Activated CD4-positive, alpha-beta T cell treated with anti-CD3 and anti-CD28 coated beads, Interleukin-2, amount 10 ng/mL, durations not matched to agents 7 days and 5 days (primary cell): ENCODE measurements at regions of chr5 and their contacts with region 1.

Region 1: DNA sequence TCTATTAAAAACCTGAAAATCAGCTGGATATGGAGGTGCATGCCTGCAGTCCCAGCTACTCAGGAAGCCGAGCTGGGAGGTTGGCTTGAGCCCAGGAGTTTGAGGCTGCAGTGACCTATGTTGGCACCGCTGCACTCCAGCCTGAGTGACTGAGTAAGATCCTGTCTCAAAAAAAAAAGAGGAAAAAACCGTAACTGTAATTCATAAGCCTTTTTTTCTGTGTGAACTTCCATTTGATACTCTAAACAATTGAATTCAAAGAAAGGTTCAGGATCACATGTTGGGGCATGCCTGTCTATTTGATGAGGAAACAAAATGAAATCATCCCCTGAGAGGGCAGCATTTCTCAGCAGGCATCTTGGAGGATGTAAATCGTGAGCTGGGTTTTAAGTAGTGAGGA is 38.8 kb downstream of the ITGA2 start:
- DNase-seq: no peak
- H3K4me3 Mint-ChIP-seq: no peak overlapping the region
- H3K27ac Mint-ChIP-seq: no peak overlapping the region
- H3K4me1 Mint-ChIP-seq: peaks cover 30% of the 10 kb centered on the region
- H3K27me3 Mint-ChIP-seq: no peaks in the 10 kb centered on the region

Region 2: GRCh38 chr5:52943285-52943684 is 84.6 kb before region 1 on chr5:
- CTCF ChIA-PET with region 1: no interaction called
- POLR2A ChIA-PET with region 1: no interaction called
- DNase-seq: no peak
- H3K4me3 Mint-ChIP-seq: no peak overlapping the region
- H3K27ac Mint-ChIP-seq: no peak overlapping the region
- H3K4me1 Mint-ChIP-seq: peaks cover 16% of the 10 kb centered on the region
- H3K27me3 Mint-ChIP-seq: peaks cover 8% of the 10 kb centered on the region

Region 3: GRCh38 chr5:52983731-52984636 is 43.9 kb before region 1 on chr5:
- CTCF ChIA-PET with region 1: no interaction called
- POLR2A ChIA-PET with region 1: no interaction called
- DNase-seq: no peak
- H3K4me3 Mint-ChIP-seq: no peak overlapping the region
- H3K27ac Mint-ChIP-seq: no peak overlapping the region
- H3K4me1 Mint-ChIP-seq: peaks cover 16% of the 10 kb centered on the region
- H3K27me3 Mint-ChIP-seq: peaks cover 71% of the 10 kb centered on the region

Region 4: DNA sequence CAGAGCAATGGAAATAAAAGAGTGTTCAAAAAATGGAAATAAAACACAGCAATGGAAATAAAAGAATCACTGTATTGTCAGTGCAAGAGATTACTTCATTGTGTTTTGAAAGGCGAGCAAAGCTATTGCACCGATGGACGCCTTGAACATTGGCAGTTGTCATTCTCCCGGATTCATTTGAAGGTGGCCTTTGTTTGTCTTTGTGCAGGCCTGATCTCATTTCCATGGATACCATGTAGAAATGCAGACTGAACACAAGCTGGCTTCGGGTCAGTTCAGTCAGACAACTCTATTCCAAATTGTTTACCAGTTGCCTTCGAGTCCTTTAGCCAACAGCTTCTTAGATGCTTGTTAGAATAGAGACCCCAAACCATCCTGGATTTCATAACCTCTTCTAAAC is 30.5 kb before region 1 on chr5:
- CTCF ChIA-PET with region 1: no interaction called
- POLR2A ChIA-PET with region 1: no interaction called
- DNase-seq: no peak
- H3K4me3 Mint-ChIP-seq: no peak overlapping the region
- H3K27ac Mint-ChIP-seq: no peak overlapping the region
- H3K4me1 Mint-ChIP-seq: peaks cover 10% of the 10 kb centered on the region
- H3K27me3 Mint-ChIP-seq: peaks cover 3% of the 10 kb centered on the region

Region 5: DNA sequence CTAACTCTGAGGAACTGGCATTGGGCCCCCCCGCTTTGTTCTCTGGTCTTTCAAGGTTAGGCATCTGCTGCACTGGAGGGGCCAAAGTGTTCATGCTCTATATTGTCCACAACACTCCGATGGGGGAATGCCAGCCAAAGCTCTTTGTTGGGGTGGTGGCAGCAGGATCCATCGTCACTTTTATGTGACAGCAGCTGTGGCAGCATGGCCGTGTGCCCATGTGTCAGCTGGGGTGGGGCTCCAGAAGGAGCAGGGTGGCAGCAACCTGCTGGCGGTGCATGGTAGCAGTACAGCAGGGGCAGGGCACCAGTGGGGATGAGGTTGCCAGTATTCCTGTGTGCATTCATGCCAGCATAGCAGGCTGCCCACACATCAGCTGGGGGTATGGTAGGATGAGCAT is 10.5 kb before region 1 on chr5:
- CTCF ChIA-PET with region 1: interaction called, 10 read pairs
- POLR2A ChIA-PET with region 1: no interaction called
- DNase-seq: no peak
- H3K4me3 Mint-ChIP-seq: no peak overlapping the region
- H3K27ac Mint-ChIP-seq: no peak overlapping the region
- H3K4me1 Mint-ChIP-seq: peaks cover 19% of the 10 kb centered on the region
- H3K27me3 Mint-ChIP-seq: peaks cover 39% of the 10 kb centered on the region

Region 6: DNA sequence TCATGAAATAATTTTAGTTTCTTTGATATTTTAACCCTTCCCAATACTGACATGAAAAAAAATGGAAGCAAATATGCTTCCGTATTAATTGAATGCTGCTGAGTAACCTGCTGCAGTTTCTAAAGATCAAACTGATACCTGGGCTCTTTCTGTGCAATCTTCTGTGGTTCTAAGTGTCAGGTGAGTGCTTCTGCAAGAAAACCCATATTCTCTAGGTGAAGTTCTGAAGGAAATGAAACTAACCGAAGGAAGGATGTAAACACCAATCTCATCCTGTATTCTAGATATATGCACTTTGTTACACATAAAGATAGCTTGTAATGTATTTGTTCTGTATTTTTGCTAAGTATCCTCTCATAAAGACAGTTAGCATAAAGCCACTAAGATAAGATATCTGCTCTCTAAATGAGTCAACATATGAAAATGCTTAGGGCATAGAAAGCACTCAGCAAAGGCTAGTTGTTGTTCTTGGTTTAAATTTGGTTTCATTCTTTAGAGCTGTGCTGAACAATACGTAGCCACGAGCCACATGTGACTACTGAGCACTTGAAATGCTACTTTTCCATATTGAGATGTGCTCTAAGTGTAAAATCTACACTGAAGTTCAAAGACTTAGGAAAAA is 13.3 kb after region 1 on chr5:
- CTCF ChIA-PET with region 1: interaction called, 19 read pairs
- POLR2A ChIA-PET with region 1: interaction called, 3 read pairs
- DNase-seq: peak; percentile 61
- H3K4me3 Mint-ChIP-seq: peak overlapping the region; percentile 65
- H3K27ac Mint-ChIP-seq: peak overlapping the region; percentile 90
- H3K4me1 Mint-ChIP-seq: peaks cover 72% of the 10 kb centered on the region
- H3K27me3 Mint-ChIP-seq: peaks cover 7% of the 10 kb centered on the region

Region 7: DNA sequence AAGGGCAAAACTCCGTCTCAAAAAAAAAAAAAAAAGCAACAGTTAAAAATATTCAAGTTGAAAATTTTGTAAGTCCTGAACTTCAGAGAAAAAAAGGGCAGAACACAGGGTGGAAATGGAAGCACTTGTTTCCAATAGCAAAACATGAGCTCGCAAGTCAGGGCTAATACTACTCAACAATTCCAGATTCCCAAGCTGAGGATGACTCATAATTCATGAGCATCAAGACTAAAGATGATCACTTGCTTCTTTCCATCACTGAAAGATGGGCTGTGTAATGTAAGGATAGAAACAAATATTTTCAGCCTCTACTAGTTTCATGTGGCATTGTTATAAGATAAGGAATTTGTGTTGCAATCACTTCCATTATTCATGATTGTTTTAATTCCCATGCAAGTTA is 419.0 kb after region 1 on chr5:
- CTCF ChIA-PET with region 1: no interaction called
- POLR2A ChIA-PET with region 1: no interaction called
- DNase-seq: no peak
- H3K4me3 Mint-ChIP-seq: no peak overlapping the region
- H3K27ac Mint-ChIP-seq: no peak overlapping the region
- H3K4me1 Mint-ChIP-seq: no peaks in the 10 kb centered on the region
- H3K27me3 Mint-ChIP-seq: peaks cover 8% of the 10 kb centered on the region